Activated T-helper 1 cell treated with anti-CD3 and anti-CD28 coated beads, Interleukin-12 subunit alpha, Interleukin-12 subunit beta, Interleukin-2, Interleukin-4 antibody, amounts not matched to agents 30 ng/mL and 10 ng/mL and 1 ng/mL, durations not matched to agents 14 hours and 24 hours and 36 hours (primary cell): ENCODE measurements at regions of chr14 and their contacts with region 1.

Region 1: GRCh38 chr14:60184146-60184904 is 19.1 kb upstream of the DHRS7 start:
- DNase-seq: no peak
- H3K4me3 Mint-ChIP-seq: peak overlapping the region; percentile 65
- H3K27ac Mint-ChIP-seq: peak overlapping the region; percentile 67
- H3K4me1 Mint-ChIP-seq: peaks cover 13% of the 10 kb centered on the region
- H3K27me3 Mint-ChIP-seq: no peaks in the 10 kb centered on the region

Region 2: DNA sequence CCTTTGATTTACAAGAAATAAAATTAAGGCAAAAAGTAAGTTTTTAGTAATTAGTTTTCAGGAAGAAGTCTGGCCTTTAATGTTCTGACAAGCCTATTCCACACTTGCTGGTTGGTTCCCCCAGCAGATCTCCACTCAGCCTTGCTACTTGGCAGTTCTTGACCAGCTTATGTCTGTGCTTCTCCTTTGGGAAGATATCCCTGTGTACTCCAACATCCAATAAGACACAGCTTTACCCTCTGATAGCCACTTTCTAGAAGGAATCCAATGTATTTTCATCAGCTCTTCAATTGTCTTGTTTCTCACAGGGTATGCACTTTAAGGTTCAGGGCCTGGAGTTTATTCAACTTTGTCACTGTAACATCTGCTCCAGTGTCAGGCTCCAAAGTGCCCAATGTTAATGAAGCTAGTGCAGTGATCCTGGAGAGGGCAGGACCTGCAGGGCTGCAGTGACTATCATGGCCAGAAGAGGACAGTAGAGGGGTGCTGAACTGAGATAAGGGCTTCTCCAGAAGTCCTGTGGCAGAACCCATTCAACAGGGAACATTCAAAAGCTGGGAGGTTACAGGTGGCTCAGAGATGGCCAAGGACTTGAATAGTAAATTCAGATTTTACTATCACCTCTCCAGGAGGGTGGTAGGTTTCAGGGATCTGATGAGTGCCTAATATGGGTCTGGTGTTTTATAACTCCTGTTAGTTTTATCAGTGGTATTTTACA is 677.1 kb before region 1 on chr14:
- intact Hi-C with region 1: loop called (anchors 1 kb)
- DNase-seq: peak; percentile 34
- H3K4me3 Mint-ChIP-seq: no peak overlapping the region
- H3K27ac Mint-ChIP-seq: no peak overlapping the region
- H3K4me1 Mint-ChIP-seq: peaks cover 4% of the 10 kb centered on the region
- H3K27me3 Mint-ChIP-seq: peaks cover 6% of the 10 kb centered on the region

Region 3: DNA sequence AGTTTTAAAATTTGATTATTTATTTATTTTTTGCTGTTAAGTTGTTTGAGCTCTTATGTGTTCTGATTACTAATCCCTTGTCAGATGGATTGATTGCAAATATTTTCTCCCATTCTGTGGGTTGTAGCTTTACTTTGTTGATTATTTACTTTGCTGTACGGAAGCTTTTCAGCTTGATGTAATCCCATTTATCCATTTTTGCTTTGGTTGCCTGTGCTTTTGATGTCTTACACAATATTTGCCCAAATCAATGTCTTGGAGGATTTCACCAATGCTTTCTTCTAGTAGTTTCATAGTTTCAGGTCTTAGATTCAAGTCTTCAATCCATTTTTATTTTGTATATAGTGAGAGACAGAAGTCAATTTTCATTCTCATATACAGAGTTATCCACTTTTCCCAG is 149.1 kb before region 1 on chr14:
- intact Hi-C with region 1: no loop called
- DNase-seq: no peak
- H3K4me3 Mint-ChIP-seq: no peak overlapping the region
- H3K27ac Mint-ChIP-seq: no peak overlapping the region
- H3K4me1 Mint-ChIP-seq: no peaks in the 10 kb centered on the region
- H3K27me3 Mint-ChIP-seq: peaks cover 8% of the 10 kb centered on the region

Region 4: DNA sequence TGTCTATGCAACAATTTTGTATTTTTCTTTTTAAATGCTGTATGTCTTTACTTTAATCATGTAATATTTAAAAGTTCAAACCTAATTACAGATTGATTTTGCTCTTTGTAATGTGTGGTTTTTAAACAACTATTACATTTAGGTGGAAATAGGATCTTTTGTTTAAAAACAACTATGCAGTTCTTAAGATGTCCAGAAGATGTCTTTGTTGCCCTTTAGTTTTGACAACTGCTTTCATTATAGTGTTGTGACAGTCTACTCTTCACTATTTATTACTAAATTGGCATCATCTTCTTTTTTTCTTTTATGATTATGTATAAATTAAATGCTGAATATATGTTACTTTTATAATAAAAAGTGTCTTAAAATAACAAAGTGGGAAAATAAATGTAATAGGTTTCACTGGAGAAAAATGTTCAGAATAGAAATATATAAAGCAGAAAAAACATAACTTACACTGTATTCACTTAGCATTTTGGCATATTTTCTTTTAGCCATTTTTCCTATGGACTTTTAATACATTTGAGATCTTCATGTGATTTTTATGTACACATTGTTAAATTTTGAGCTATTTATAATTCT is 119.7 kb before region 1 on chr14:
- intact Hi-C with region 1: loop called (anchors 1 kb)
- DNase-seq: no peak
- H3K4me3 Mint-ChIP-seq: no peak overlapping the region
- H3K27ac Mint-ChIP-seq: no peak overlapping the region
- H3K4me1 Mint-ChIP-seq: no peaks in the 10 kb centered on the region
- H3K27me3 Mint-ChIP-seq: peaks cover 9% of the 10 kb centered on the region

Region 5: DNA sequence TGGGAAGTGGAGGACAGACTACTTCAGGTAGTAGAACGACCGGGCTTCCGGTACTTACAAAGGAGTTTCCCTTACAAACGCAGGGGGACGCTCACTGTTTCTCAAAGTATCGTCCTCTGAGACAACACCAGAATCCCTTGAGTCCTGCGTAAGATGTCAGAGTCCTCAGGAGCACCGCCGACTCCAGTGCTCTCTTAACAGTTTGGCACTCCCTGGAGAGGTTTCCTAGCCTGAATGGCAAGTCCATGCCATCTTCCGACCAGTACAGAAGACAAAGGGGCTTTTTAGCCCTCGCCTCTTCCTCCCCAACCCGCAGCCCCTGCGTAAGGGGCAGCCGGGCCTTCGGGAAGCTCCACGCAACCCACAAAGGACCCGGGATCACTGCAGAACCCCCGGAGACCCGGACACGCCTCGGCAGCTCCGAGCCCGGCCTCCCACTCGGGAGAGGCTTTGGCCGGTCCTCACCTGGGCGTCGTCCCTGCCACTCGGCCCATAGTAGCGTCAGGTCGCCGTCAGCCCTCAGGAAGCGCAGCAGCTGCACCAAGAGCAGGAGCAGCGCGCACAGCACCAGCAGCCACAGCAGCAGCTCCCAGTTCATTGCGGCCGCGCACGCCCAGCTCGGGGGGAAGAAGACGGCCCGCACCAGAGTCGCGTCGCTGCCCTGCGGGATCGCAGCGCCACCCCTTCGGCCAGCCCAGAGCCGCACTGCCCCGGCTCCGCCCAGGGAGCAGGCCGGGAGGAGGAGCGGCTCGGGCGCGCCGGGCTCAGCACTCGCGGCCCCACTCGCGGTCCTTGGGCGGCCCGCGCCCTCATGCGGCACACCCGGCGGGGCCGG is 19.4 kb before region 1 on chr14 and contains the start of gene DHRS7:
- intact Hi-C with region 1: loop called (anchors 1 kb)
- DNase-seq: peak; percentile 55
- H3K4me3 Mint-ChIP-seq: peak within 1 kb of the TSS; percentile 95
- H3K27ac Mint-ChIP-seq: peak within 1 kb of the TSS; percentile 98
- H3K4me1 Mint-ChIP-seq: peaks cover 20% of the 10 kb centered on the region
- H3K27me3 Mint-ChIP-seq: no peaks in the 10 kb centered on the region
- total RNA-seq, gene DHRS7: 43.6 and 47.2 TPM in 2 replicates

Region 6: GRCh38 chr14:60331201-60332045 is 147.1 kb after region 1 on chr14:
- intact Hi-C with region 1: loop called (anchors 5 kb)
- DNase-seq: peak; percentile 60
- H3K4me3 Mint-ChIP-seq: peak overlapping the region; percentile 92
- H3K27ac Mint-ChIP-seq: peak overlapping the region; percentile 94
- H3K4me1 Mint-ChIP-seq: peaks cover 45% of the 10 kb centered on the region
- H3K27me3 Mint-ChIP-seq: peaks cover 37% of the 10 kb centered on the region